ENCODE measurements at regions of chr13 and their contacts with region 1.

Region 1: GRCh38 chr13:109786457-109787134 is at the start of gene IRS2:
- DNase-seq: peak; percentile 97
- H3K4me3 Mint-ChIP-seq: peak within 1 kb of the TSS; percentile 82
- H3K27ac Mint-ChIP-seq: peak within 1 kb of the TSS; percentile 64
- H3K4me1 Mint-ChIP-seq: peaks cover 10% of the 10 kb centered on the region
- H3K27me3 Mint-ChIP-seq: peaks cover 28% of the 10 kb centered on the region
- total RNA-seq, gene IRS2: 3.2 and 3.5 TPM in 2 replicates

Region 2: DNA sequence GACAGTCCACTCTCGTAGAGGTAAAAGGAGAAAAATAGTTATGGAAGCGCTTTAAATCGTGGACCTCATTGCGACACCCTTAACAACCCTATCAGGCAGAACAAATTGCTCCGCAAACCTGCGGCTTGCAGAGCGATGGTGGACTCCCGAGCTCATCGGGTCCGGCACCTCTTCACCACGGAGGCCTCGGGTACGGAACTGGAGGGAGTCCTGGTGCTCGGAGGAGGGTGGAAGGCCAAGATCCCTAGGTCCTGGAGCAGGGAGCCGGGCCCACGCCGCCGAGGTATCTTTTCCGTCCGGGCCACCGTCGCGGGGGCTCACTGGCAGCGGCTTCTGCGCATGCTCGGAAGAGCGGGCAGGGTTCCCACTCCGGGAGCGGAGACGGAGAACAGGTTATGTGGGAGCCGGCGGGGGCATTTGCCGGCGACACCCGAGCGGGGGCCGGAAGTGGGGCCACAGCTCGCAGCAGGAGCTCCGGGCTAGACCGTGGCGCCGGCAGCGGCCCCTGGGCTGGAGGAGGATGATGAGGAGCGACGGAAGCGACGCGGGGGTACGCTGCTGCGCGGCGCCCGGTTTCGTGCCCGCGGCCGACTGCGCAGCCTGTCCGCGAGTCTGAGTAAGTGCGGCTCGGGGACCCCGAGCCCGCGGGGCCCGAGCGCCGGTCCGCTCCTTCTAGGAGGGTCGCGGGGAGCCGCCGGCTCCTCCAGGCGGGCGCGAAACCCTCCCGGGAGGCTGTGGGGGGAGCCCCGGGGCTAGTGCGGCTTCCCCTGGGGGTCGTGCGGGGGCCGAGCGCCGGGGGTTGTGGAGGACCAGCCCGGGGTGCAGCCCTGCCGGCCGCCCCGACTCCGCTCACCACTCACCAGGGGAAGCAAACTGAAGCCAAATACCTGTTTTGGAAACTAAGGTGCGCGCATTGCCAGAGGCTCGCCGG is 1568.3 kb before region 1 on chr13 and contains the start of gene ABHD13:
- intact Hi-C with region 1: loop called (anchors 5 kb)
- DNase-seq: peak; percentile 97
- H3K4me3 Mint-ChIP-seq: peak within 1 kb of the TSS; percentile 93
- H3K27ac Mint-ChIP-seq: peak within 1 kb of the TSS; percentile 95
- H3K4me1 Mint-ChIP-seq: peaks cover 39% of the 10 kb centered on the region
- H3K27me3 Mint-ChIP-seq: peaks cover 3% of the 10 kb centered on the region
- total RNA-seq, gene ABHD13: 7.6 and 8.0 TPM in 2 replicates

Region 3: GRCh38 chr13:108961542-108962125 is 825.0 kb before region 1 on chr13:
- intact Hi-C with region 1: loop called (anchors 2 kb)
- DNase-seq: peak; percentile 74
- H3K4me3 Mint-ChIP-seq: no peak overlapping the region
- H3K27ac Mint-ChIP-seq: no peak overlapping the region
- H3K4me1 Mint-ChIP-seq: peaks cover 2% of the 10 kb centered on the region
- H3K27me3 Mint-ChIP-seq: peaks cover 2% of the 10 kb centered on the region

Region 4: DNA sequence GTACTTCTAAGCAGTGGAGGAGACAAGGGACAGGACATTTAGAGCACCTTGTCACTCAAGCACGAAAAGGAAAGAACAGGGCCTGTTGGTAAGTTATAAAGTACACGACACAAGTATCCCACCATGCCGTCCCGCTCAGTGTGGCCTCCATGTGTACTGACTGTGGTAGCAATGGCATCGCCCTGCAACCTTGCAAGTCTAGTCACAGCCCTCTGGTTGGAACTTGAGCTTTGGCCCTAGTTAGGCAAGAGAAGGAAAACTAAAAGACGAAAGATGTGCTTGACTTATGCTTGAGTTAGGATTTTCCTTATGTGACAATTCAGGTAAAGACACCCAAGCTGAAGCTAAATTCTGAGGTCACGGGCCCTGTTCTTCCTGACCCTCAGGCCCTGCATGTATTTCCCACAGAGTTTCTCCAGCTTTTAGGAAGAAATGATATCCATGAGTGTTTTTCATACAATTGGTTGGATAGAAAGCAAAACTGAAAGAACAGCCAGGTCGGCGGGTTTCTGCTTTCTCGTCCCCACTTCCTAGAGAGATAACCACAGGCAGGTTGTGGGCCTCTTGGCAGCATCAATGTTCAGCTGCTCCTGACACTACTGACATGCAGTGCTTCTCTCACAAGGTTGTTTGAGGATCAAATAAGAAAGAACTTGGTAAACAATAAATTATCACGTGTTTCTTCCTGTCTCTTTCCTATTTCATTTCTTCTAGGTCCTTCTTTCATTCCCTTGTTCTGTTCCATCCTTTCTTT is 216.5 kb before region 1 on chr13:
- intact Hi-C with region 1: loop called (anchors 10 kb)
- DNase-seq: peak; percentile 88
- H3K4me3 Mint-ChIP-seq: peak overlapping the region; percentile 61
- H3K27ac Mint-ChIP-seq: peak overlapping the region; percentile 47
- H3K4me1 Mint-ChIP-seq: peaks cover 17% of the 10 kb centered on the region
- H3K27me3 Mint-ChIP-seq: peaks cover 15% of the 10 kb centered on the region

Region 5: GRCh38 chr13:109883181-109884180 is 96.9 kb after region 1 on chr13:
- intact Hi-C with region 1: no loop called
- DNase-seq: peak; percentile 39
- H3K4me3 Mint-ChIP-seq: no peak overlapping the region
- H3K27ac Mint-ChIP-seq: no peak overlapping the region
- H3K4me1 Mint-ChIP-seq: no peaks in the 10 kb centered on the region
- H3K27me3 Mint-ChIP-seq: no peaks in the 10 kb centered on the region

Region 6: DNA sequence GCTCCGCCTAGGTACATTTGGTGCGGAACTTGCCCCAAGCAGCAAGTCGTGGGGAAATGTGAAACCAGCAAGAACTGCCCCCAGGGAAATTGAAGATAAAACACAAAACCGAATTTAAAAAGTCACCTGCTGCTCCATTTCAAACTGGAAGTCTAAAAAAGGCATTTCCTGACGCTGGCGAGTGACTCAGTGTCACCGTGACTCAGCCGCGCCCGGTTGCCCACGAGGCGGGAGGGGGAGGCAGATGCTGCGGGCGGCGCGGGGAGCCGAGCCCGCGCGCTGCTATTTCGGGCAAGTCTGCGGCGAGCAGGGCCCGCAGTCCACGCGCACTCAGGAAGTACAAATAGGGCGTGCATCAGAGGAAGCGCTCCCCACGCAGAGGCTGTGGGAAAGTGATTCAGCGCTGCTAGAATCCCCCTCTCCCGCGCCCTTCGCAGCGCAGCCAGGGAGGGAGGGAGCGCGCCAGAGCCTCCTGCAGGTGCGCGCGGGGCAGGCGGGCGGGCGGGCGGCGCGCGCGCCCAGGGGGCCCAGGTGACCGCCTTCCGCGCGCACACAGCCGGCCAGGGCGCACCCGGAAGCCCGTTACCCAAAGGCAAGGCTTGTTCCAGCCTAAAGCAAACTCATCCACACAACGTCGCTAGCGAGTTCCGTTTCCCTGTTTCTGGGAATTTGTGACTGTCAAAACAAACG is 351.6 kb after region 1 on chr13:
- intact Hi-C with region 1: loop called (anchors 1 kb)
- DNase-seq: peak; percentile 90
- H3K4me3 Mint-ChIP-seq: peak overlapping the region; percentile 84
- H3K27ac Mint-ChIP-seq: peak overlapping the region; percentile 82
- H3K4me1 Mint-ChIP-seq: peaks cover 13% of the 10 kb centered on the region
- H3K27me3 Mint-ChIP-seq: peaks cover 58% of the 10 kb centered on the region

Region 7: DNA sequence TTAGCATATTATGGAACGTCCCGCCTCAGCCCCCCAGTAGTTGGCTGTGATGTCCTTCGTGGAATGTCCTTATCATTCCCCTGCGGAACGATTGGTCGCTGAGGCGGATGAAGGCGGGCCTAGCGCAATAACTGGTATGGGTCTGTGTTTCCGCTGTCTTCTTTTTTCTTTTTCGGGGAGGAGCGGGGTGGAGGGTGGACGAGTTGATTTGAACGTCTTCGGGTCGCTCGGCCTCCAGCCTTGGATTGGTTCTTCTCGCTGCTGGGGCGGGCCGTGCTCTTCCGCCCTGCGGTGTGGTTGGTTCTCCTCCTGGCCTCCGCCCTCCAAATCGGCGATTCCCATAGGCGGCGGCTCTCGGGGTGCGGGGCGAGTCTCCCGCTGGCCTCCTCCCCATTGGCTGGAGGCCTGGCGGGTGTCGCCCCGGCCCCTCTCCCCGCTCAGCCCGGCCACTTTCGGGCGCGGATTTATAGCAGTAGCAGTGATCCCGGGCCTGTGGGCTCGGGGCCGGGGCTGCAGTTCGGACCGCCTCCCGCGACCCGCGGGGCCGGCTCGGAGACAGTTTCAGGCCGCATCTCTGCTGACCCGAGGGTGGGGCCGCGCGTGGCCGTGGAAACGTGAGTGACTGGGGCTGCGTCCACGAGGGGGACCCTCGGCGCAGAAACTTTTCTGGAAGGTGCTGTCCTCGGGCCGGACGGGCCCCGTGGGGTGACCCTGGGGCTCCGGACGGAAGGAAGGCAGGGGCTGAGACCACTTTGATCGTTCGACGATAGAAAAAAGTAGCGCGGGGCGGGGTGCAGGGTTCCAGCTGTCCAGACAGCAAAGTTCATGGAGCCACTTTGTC is 929.0 kb after region 1 on chr13:
- intact Hi-C with region 1: loop called (anchors 5 kb)
- DNase-seq: peak; percentile 98
- H3K4me3 Mint-ChIP-seq: peak overlapping the region; percentile 96
- H3K27ac Mint-ChIP-seq: peak overlapping the region; percentile 95
- H3K4me1 Mint-ChIP-seq: peaks cover 29% of the 10 kb centered on the region
- H3K27me3 Mint-ChIP-seq: peaks cover 2% of the 10 kb centered on the region

Measured in activated CD4-positive, alpha-beta T cell treated with anti-CD3 and anti-CD28 coated beads, Interleukin-2, amount 10 ng/mL, durations not matched to agents 24 days and 14 days (primary cell).